Natural killer cell (primary cell): ENCODE measurements at regions of chr17 and their contacts with region 1.

Region 1: GRCh38 chr17:35242805-35243560 is at the start of gene SLFN5:
- DNase-seq: peak; percentile 96 to 97
- ATAC-seq: peak; percentile 65 to 86 (median 77)
- H3K4me3 ChIP-seq: peak within 1 kb of the TSS; percentile 78
- H3K4me3 Mint-ChIP-seq: peak within 1 kb of the TSS; percentile 97
- H3K27ac ChIP-seq: peak within 1 kb of the TSS; percentile 98
- H3K27ac Mint-ChIP-seq: peak within 1 kb of the TSS; percentile 97 to 100
- H3K4me1 ChIP-seq: peaks cover 52% of the 10 kb centered on the region
- H3K4me1 Mint-ChIP-seq: peaks cover 73 to 76% of the 10 kb centered on the region in 2 donors
- H3K27me3 ChIP-seq: no peaks in the 10 kb centered on the region
- H3K27me3 Mint-ChIP-seq: no peaks in the 10 kb centered on the region
- CTCF ChIP-seq: no peak
- total RNA-seq, gene SLFN5: 118 to 164 (median 141) TPM

Region 2: DNA sequence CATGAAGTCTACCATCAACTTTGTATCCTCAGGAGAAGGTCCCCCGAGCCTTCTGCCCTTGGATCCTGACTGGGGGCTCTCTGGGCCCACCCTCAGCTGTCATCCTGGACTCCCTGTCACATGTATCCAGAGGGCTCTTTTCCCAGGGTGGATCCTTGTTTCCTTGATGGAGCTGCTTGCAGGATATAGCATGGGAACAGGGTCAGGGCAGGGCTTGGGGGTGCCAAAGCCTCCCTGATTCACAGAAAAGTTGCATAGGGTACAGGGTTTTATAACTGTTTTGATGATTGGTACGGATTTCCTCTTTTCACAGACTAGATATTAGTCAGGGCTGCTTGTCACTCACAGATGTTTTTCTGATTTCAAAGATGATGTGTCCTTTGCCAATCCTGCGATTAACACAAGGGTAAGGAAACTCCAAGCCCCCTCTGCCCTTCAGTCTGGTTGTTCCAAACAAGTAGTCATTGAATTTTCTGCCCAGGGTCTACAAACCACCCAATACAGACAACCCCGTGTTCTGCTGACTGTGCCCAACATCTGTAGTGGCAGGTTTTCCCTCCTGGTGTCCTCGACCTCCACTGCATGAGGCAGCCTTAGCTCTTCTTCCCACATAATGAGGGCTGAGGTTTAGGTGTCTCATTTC is 28.2 kb before region 1 on chr17:
- intact Hi-C with region 1: loop called (anchors 1 kb)
- DNase-seq: peak in 1 of 2 donors; percentile 62
- ATAC-seq: peak; percentile 36 to 56 (median 48)
- H3K4me3 ChIP-seq: no peak overlapping the region
- H3K4me3 Mint-ChIP-seq: peak overlapping the region; percentile 68
- H3K27ac ChIP-seq: peak overlapping the region; percentile 93
- H3K27ac Mint-ChIP-seq: peak overlapping the region; percentile 85 to 92
- H3K4me1 ChIP-seq: peaks cover 51% of the 10 kb centered on the region
- H3K4me1 Mint-ChIP-seq: peaks cover 69 to 79% of the 10 kb centered on the region in 2 donors
- H3K27me3 ChIP-seq: no peaks in the 10 kb centered on the region
- H3K27me3 Mint-ChIP-seq: no peaks in the 10 kb centered on the region
- CTCF ChIP-seq: no peak

Region 3: DNA sequence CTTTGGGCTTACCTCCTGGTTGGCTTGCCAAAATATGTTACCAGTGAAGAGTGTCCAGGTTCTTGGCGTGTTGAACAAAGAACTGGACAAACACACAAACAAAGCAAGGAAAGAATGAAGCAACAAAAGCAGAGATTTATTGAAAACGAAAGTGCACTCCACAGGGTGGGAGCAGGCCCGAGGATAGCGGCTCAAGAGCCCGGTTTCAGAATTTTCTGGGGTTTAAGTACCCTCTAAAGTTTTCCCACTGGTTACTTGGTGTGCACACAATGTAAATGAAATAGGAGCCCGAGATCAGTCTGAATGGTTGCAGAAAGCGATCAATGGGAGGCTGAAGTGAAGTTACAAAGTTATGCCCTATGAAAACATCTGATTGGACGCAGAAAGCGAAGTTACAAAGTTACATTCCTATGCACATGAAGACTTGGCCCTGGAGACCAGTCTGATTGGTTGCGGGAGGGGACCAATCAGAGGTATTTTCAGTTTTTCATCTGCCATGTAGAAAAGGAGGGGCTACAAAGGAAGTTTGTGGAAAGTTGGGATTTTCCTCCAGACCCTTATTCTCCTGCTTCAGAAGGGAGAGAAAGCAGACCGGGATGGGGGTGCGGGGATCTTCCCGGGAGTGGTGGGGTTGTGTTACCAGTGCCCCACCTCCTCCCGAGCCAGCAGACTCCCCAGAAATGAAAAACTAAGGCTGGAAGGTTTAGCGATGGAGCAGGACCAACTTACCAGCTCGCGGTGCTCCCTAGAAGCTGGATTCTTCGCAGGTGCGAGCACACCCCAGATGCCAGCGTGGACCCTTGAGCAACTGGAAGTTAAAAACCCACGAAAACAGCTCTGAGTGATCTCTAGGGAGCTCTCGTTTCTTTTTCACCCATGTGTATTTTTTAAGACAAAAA is 189.4 kb after region 1 on chr17 and contains the start of gene SLFN12:
- intact Hi-C with region 1: loop called (anchors 5 kb)
- DNase-seq: peak; percentile 47 to 84
- ATAC-seq: peak; percentile 83 to 90 (median 89)
- H3K4me3 ChIP-seq: peak within 1 kb of the TSS; percentile 62
- H3K4me3 Mint-ChIP-seq: peak within 1 kb of the TSS; percentile 99
- H3K27ac ChIP-seq: peak within 1 kb of the TSS; percentile 55
- H3K27ac Mint-ChIP-seq: peak within 1 kb of the TSS; percentile 95 to 96
- H3K4me1 ChIP-seq: peaks cover 33% of the 10 kb centered on the region
- H3K4me1 Mint-ChIP-seq: peaks cover 63% of the 10 kb centered on the region in 2 donors
- H3K27me3 ChIP-seq: no peaks in the 10 kb centered on the region
- H3K27me3 Mint-ChIP-seq: no peaks in the 10 kb centered on the region
- CTCF ChIP-seq: no peak
- total RNA-seq, gene SLFN12: 18.6 to 30.9 (median 21.8) TPM

Region 4: DNA sequence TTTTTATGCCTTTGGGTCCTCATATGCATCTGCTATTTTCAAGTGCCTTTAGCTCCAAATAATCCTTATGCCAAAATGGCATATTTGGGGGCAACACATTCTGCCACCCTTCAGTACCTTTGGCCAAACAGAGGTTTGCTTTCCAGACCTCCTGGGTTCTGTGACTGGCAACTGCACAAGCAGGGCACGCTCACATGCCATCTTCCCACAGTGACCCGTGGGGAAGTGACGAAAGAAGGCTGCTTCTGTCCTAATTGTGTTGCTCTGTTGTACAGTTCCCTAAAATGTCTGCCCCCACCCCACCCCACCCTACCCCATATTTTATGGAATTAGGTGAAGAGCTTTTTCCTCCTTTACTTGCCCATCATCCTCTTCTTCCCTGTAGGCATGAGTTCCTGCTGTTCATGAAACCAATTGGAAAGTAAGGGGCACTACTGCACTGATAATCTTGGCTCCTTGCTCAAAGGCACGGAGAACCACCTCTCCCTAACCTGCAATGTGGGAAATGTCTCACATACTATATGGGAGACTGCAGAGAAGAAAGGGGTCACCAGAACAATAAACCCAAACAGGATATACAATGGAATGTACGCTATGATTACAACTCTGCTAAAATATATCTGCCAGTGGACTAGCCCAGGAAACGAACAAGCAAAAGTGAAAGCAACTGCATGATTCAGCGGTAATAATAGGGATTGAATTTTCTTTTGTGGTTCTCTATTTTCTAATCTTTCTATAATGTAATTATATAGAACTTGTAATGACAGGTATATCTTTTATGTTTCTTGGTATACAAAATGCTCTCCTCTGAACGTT is 297.8 kb after region 1 on chr17:
- intact Hi-C with region 1: loop called (anchors 1 kb)
- DNase-seq: peak in 1 of 2 donors; percentile 74
- ATAC-seq: peak; percentile 42 to 61 (median 54)
- H3K4me3 ChIP-seq: peak overlapping the region; percentile 39
- H3K4me3 Mint-ChIP-seq: peak overlapping the region; percentile 90
- H3K27ac ChIP-seq: peak overlapping the region; percentile 88
- H3K27ac Mint-ChIP-seq: peak overlapping the region; percentile 84 to 88
- H3K4me1 ChIP-seq: peaks cover 26% of the 10 kb centered on the region
- H3K4me1 Mint-ChIP-seq: peaks cover 46 to 53% of the 10 kb centered on the region in 2 donors
- H3K27me3 ChIP-seq: no peaks in the 10 kb centered on the region
- H3K27me3 Mint-ChIP-seq: no peaks in the 10 kb centered on the region
- CTCF ChIP-seq: no peak

Region 5: DNA sequence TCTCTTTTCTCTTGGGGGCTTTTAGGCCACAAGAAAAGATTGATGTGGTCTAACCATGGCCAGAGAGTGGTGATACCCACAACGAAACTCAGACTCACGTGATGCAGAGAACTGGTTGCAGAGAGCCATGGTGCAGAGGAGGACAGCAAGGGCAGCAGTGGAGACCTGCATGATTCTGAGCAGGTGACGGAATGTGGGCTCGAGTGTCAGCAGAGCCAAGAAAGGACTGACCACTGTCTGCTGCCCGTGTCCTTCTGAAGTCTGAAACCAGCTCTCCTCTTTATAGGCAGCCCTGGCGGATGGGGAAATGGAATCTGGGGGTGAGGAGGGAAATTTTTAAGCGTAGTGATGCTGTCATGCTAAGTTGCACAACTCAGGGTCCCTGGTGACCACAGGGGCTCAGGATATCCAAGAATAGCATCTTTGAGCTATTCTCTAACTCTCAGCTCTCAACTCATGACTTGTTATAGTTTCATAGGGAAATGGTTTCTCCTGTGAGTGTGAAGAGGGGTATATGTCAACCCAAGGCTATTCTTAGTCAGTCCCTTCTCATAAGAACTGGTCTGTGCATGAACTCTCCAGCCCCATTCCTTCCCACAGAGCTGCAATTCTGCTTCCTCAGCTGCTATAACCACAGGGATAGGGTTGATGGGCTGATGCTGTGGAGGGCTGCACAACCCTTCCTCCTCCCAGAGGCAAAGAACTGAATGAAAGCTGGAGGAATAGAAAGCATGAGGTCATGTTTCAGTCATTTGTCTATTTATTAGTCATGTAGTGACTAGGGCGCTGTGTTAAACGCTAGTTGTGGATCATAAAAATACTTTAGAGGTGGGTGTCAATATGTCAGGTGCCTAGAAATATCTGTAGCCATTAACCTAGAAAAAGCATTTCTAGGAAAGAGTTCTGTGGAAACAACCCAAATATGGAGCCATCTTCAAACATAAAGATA is 847.2 kb after region 1 on chr17 and contains the start of gene CCL3:
- intact Hi-C with region 1: loop called (anchors 10 kb)
- DNase-seq: peak; percentile 60 to 70
- ATAC-seq: peak; percentile 57 to 77 (median 71)
- H3K4me3 ChIP-seq: peak within 1 kb of the TSS; percentile 33
- H3K4me3 Mint-ChIP-seq: peak within 1 kb of the TSS; percentile 91
- H3K27ac ChIP-seq: peak within 1 kb of the TSS; percentile 87
- H3K27ac Mint-ChIP-seq: peak within 1 kb of the TSS; percentile 100
- H3K4me1 ChIP-seq: peaks cover 55% of the 10 kb centered on the region
- H3K4me1 Mint-ChIP-seq: peaks cover 90 to 91% of the 10 kb centered on the region in 2 donors
- H3K27me3 ChIP-seq: no peaks in the 10 kb centered on the region
- H3K27me3 Mint-ChIP-seq: no peaks in the 10 kb centered on the region
- CTCF ChIP-seq: no peak
- total RNA-seq, gene CCL3: 381 to 547 (median 450) TPM